Esophagus muscularis mucosa (tissue), 4 donors: ENCODE measurements at regions of chr1 and their contacts with region 1.

Region 1: DNA sequence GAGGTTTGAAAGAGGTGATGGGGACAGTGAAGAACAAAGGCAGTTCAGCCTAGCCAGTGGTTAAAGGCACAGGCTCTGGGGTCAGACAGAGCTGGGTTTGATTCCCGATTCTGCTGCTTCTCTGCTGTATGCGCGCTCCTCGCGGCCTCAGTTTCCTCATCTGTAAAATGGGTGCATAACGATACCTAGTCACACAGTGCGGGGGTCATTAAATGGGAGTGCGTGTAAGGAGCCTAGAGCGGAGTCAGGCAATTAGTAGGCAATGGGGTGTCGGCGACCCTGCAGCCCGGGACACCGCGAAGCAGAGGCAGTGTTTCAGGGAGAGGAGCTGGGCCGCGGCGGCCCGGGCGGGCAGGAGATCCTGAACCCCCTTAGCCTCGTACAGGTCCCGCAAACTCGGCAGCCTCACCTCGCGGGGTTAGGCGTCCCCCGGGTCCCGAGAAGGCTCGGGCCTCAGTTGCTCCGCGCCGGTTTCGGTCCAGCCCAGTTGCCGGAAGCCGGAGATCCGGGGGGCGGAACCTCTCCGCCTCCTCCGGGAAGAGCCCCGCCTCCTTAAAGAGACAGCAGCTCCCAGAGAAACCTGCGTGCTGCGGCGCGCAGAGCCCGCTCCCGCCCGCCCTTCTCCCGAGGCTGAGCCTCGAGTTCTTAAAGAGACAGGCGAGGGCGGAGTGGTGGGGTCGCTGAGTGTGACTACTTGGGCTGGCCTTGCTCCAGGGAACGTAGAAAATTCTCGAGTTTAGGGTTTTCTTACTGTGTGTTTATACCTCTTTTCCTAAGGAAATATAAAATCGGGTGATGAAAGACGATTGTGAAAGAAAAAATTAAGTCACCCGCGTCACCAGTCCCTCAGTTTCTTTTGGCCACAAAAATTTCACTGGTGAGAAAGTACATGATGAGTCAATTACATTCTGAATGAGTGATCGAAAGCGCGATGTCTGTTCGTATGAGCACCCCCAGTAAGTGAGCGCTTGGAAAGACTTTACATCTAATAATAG is at the start of gene YIPF1:
- DNase-seq: peak; percentile 97
- H3K4me3 ChIP-seq: peak within 1 kb of the TSS; percentile 86 to 98 (median 90)
- H3K27ac ChIP-seq: peak within 1 kb of the TSS; percentile 79 to 91 (median 81)
- H3K4me1 ChIP-seq: peaks cover 13 to 26% (median 21%) of the 10 kb centered on the region in 4 donors
- H3K27me3 ChIP-seq: no peaks in the 10 kb centered on the region
- CTCF ChIP-seq: no peak
- EP300 ChIP-seq: no peak
- POLR2A ChIP-seq: peak; percentile 68
- total RNA-seq, gene YIPF1: 16.8 to 21.4 (median 19.7) TPM

Region 2: DNA sequence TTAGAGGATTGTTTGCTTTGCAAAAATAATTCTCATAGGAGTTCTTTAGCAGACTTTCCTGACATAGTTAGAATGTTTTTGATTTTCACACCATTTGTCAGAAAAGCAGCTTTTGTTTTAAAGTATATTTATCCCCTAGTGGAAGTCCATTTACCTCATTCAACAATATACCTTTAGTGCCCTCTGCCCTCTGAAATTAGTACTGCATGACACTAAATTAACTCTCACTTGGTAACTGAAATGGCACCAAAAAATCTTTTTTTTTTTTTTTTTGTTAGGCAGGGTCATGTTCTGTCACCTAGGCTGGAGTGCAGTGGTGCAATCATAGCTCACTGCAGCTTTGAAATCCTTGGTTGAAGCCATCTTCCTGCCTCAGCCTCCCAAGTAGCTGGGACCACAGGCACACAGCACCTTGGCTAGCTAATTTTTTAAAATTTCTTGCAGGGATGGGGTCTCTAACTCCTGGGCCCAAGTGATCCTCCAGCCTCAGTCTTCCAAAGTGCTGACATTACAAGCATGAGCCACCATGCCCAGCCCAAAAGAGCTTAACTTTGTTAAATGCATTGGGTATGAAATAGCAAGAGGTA is 70.2 kb after region 1 on chr1:
- intact Hi-C with region 1: no loop called
- DNase-seq: no peak
- H3K4me3 ChIP-seq: no peak overlapping the region
- H3K27ac ChIP-seq: no peak overlapping the region
- H3K4me1 ChIP-seq: peaks cover 10 to 19% (median 15%) of the 10 kb centered on the region in 4 donors
- H3K27me3 ChIP-seq: no peaks in the 10 kb centered on the region
- CTCF ChIP-seq: peak; percentile 40 to 53 (median 51)
- EP300 ChIP-seq: no peak
- POLR2A ChIP-seq: no peak

Region 3: DNA sequence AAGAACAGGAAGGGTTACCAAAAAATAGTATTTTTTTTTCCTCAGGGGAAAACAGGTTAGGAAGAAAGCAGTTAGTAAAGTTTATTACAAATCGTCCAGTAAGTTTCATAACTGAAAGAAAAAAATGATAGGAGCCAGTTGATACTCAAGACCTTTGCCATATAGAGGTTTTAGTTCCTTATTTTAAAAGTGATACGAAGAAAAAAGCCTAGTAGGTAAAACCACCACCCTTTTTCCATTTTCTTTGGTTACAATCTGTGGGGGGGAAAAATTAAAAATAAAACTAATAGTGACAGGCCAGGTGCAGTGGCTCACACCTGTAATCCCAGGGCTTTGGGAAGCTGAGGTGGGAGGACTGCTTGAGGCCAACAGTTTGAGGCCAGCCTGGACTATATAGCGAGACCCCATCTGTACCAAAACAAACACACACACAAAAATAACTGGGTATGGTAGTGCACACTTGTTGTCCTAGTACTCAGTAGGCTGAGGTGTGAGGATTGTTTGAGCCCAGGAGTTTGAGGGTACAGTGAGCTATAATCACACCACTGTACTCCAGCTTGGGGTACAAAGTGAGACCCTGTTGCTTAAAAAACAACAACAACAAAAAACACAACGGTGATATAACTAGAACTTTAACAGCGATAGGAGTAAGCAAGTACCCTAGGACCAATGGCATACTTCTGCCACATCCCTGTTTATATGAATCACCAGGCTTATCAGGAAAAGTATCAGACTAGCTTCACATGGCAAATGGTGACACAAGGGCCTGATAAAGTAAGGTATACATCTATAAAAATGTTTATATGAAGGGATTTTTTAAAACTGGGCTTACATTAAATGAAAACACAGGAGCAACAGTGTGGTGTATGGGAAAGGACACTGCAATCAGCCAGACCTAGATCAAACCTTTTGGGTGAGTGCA is 158.0 kb after region 1 on chr1:
- intact Hi-C with region 1: loop called (anchors 5 kb)
- DNase-seq: no peak
- H3K4me3 ChIP-seq: no peak overlapping the region
- H3K27ac ChIP-seq: peak overlapping the region in 3 of 4 donors; percentile 5 to 23 (median 5)
- H3K4me1 ChIP-seq: peaks cover 50 to 74% (median 67%) of the 10 kb centered on the region in 4 donors
- H3K27me3 ChIP-seq: no peaks in the 10 kb centered on the region
- CTCF ChIP-seq: no peak
- EP300 ChIP-seq: no peak
- POLR2A ChIP-seq: no peak